ENCODE measurements at regions of chr3 and their contacts with region 1.

Region 1: GRCh38 chr3:159260049-159260662 is 458.3 kb downstream of the MFSD1 start:
- DNase-seq: peak; percentile 12 to 33 (median 16)
- H3K4me3 ChIP-seq: no peak overlapping the region
- H3K4me3 Mint-ChIP-seq: no peak overlapping the region
- H3K27ac ChIP-seq: no peak overlapping the region
- H3K27ac Mint-ChIP-seq: no peak overlapping the region
- H3K4me1 ChIP-seq: no peaks in the 10 kb centered on the region
- H3K4me1 Mint-ChIP-seq: no peaks in the 10 kb centered on the region
- H3K27me3 ChIP-seq: no peaks in the 10 kb centered on the region
- H3K27me3 Mint-ChIP-seq: peaks cover 6 to 8% (median 8%) of the 10 kb centered on the region in 3 donors
- CTCF ChIP-seq: peak; percentile 59

Region 2: GRCh38 chr3:158845765-158846350 is 414.3 kb before region 1 on chr3:
- intact Hi-C with region 1: loop called in 1 of 2 experiments (anchors 5 kb)
- DNase-seq: peak in 1 of 3 donors; percentile 15
- H3K4me3 ChIP-seq: no peak overlapping the region
- H3K4me3 Mint-ChIP-seq: no peak overlapping the region
- H3K27ac ChIP-seq: no peak overlapping the region
- H3K27ac Mint-ChIP-seq: no peak overlapping the region
- H3K4me1 ChIP-seq: no peaks in the 10 kb centered on the region
- H3K4me1 Mint-ChIP-seq: no peaks in the 10 kb centered on the region
- H3K27me3 ChIP-seq: no peaks in the 10 kb centered on the region
- H3K27me3 Mint-ChIP-seq: peaks cover 0 to 3% (median 1%) of the 10 kb centered on the region in 3 donors
- CTCF ChIP-seq: peak; percentile 63

Region 3: GRCh38 chr3:159362496-159362895 is 102.3 kb after region 1 on chr3:
- intact Hi-C with region 1: no loop called
- DNase-seq: no peak
- H3K4me3 ChIP-seq: no peak overlapping the region
- H3K4me3 Mint-ChIP-seq: no peak overlapping the region
- H3K27ac ChIP-seq: no peak overlapping the region
- H3K27ac Mint-ChIP-seq: no peak overlapping the region
- H3K4me1 ChIP-seq: no peaks in the 10 kb centered on the region
- H3K4me1 Mint-ChIP-seq: no peaks in the 10 kb centered on the region
- H3K27me3 ChIP-seq: no peaks in the 10 kb centered on the region
- H3K27me3 Mint-ChIP-seq: peaks cover 0 to 2% (median 0%) of the 10 kb centered on the region in 3 donors
- CTCF ChIP-seq: no peak